ENCODE measurements at regions of chr1 and their contacts with region 1.

Region 1: GRCh38 chr1:54810100-54810942 is 9.2 kb upstream of the TTC22 start:
- DNase-seq: peak; percentile 42
- ATAC-seq: peak; percentile 93
- H3K4me3 ChIP-seq: no peak overlapping the region; a peak in 1 of 6 replicates
- H3K27ac ChIP-seq: no peak overlapping the region
- H3K4me1 ChIP-seq: peaks cover 46% of the 10 kb centered on the region
- H3K27me3 ChIP-seq: peaks cover 2 to 26% of the 10 kb centered on the region in 2 experiments; a peak in 3 of 5 replicates
- CTCF ChIP-seq: peak; percentile 97
- EP300 ChIP-seq: no peak
- POLR2A ChIP-seq: no peak
- RAD21 ChIP-seq: peak; percentile 92

Region 2: GRCh38 chr1:54671985-54672608 is 138.2 kb before region 1 on chr1:
- CTCF ChIA-PET with region 1: interaction called, 14 read pairs
- POLR2A ChIA-PET with region 1: no interaction called
- in situ Hi-C with region 1: loop called (anchors 5 kb)
- intact Hi-C with region 1: loop called (anchors 1 kb)
- DNase-seq: peak; percentile 44
- ATAC-seq: peak; percentile 90
- H3K4me3 ChIP-seq: no peak overlapping the region
- H3K27ac ChIP-seq: no peak overlapping the region
- H3K4me1 ChIP-seq: no peaks in the 10 kb centered on the region
- H3K27me3 ChIP-seq: no peaks in the 10 kb centered on the region; a peak in 1 of 5 replicates
- CTCF ChIP-seq: peak; percentile 89
- EP300 ChIP-seq: no peak
- POLR2A ChIP-seq: no peak
- RAD21 ChIP-seq: peak; percentile 85

Region 3: DNA sequence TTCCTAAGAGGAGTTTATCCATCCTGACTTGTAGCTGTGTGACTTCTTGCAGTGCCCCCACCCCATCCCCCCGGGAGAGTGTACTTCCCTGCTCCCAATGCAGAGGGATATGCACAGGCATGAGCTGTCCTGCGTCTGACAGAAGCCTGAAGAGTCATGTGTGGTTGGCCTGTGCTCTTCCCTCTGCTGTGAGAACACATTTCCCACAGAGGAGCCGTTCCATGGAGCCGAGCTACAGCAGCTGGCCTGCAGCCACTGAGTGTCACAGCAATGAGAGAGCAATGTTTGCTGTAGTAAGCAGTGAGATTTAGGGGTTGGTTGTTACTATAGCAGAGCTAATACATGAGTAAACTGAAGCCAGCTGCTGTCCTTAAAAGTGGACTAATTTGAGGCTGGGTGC is 68.0 kb before region 1 on chr1:
- CTCF ChIA-PET with region 1: no interaction called
- POLR2A ChIA-PET with region 1: no interaction called
- in situ Hi-C with region 1: no loop called
- intact Hi-C with region 1: no loop called
- DNase-seq: no peak
- ATAC-seq: no peak
- H3K4me3 ChIP-seq: no peak overlapping the region
- H3K27ac ChIP-seq: no peak overlapping the region
- H3K4me1 ChIP-seq: no peaks in the 10 kb centered on the region
- H3K27me3 ChIP-seq: no peaks in the 10 kb centered on the region
- CTCF ChIP-seq: no peak
- EP300 ChIP-seq: no peak
- POLR2A ChIP-seq: no peak
- RAD21 ChIP-seq: no peak

Region 4: GRCh38 chr1:54791880-54792522 is 18.3 kb before region 1 on chr1:
- CTCF ChIA-PET with region 1: interaction called, 4 read pairs
- POLR2A ChIA-PET with region 1: no interaction called
- in situ Hi-C with region 1: no loop called
- intact Hi-C with region 1: loop called (anchors 2 kb)
- DNase-seq: peak; percentile 65
- ATAC-seq: peak; percentile 55
- H3K4me3 ChIP-seq: no peak overlapping the region
- H3K27ac ChIP-seq: no peak overlapping the region
- H3K4me1 ChIP-seq: peaks cover 44% of the 10 kb centered on the region
- H3K27me3 ChIP-seq: peaks cover 0 to 7% of the 10 kb centered on the region in 2 experiments; a peak in 1 of 5 replicates
- CTCF ChIP-seq: peak; percentile 83
- EP300 ChIP-seq: no peak
- POLR2A ChIP-seq: no peak
- RAD21 ChIP-seq: peak; percentile 66; the same call in 1 of the 2 replicates

Region 5: GRCh38 chr1:54996359-54996868 is 186.1 kb after region 1 on chr1:
- CTCF ChIA-PET with region 1: no interaction called
- POLR2A ChIA-PET with region 1: no interaction called
- in situ Hi-C with region 1: loop called (anchors 10 kb)
- intact Hi-C with region 1: no loop called
- DNase-seq: peak; percentile 58
- ATAC-seq: peak; percentile 82
- H3K4me3 ChIP-seq: no peak overlapping the region
- H3K27ac ChIP-seq: no peak overlapping the region
- H3K4me1 ChIP-seq: peaks cover 15% of the 10 kb centered on the region
- H3K27me3 ChIP-seq: peaks cover 0 to 50% of the 10 kb centered on the region in 2 experiments
- CTCF ChIP-seq: peak; percentile 95
- EP300 ChIP-seq: no peak
- POLR2A ChIP-seq: no peak
- RAD21 ChIP-seq: peak; percentile 91

Measured in HepG2 (cell line).